ENCODE measurements at regions of chr13 and their contacts with region 1.

Region 1: GRCh38 chr13:78137404-78138142 is 218.9 kb upstream of the EDNRB start:
- DNase-seq: peak; percentile 65
- ATAC-seq: peak; percentile 71
- H3K4me3 ChIP-seq: peak overlapping the region in 4 of 5 experiments; percentile 23 to 48 (median 33)
- H3K4me3 Mint-ChIP-seq: peak overlapping the region; percentile 83
- H3K27ac ChIP-seq: no peak overlapping the region
- H3K27ac Mint-ChIP-seq: no peak overlapping the region
- H3K4me1 ChIP-seq: peaks cover 7% of the 10 kb centered on the region in 2 donors
- H3K4me1 Mint-ChIP-seq: peaks cover 5% of the 10 kb centered on the region
- H3K27me3 ChIP-seq: no peaks in the 10 kb centered on the region
- H3K27me3 Mint-ChIP-seq: no peaks in the 10 kb centered on the region
- CTCF ChIP-seq: peak; percentile 78

Region 2: DNA sequence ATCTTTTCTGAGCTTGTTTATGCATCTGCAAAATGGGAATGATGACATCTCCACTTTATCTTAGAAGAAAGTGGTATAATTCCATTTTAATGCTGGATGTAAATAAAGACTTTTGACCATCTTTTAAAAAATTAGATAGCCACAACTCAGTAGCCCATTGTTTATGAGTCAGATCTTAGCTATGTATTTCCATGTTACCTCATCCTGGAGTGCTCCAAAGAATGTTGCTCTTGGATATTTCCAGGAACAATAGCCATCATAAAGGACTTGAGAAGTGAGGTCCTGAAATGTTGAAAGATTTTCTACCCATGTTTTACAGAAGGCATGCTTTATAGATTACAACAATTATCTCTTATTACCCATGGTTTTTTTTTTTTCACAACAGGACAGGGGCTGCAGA is 10.3 kb after region 1 on chr13:
- CTCF ChIA-PET with region 1: interaction called, 18 read pairs
- POLR2A ChIA-PET with region 1: no interaction called
- intact Hi-C with region 1: no loop called
- DNase-seq: no peak
- ATAC-seq: no peak
- H3K4me3 ChIP-seq: no peak overlapping the region
- H3K4me3 Mint-ChIP-seq: no peak overlapping the region
- H3K27ac ChIP-seq: no peak overlapping the region
- H3K27ac Mint-ChIP-seq: no peak overlapping the region
- H3K4me1 ChIP-seq: no peaks in the 10 kb centered on the region
- H3K4me1 Mint-ChIP-seq: no peaks in the 10 kb centered on the region
- H3K27me3 ChIP-seq: no peaks in the 10 kb centered on the region
- H3K27me3 Mint-ChIP-seq: peaks cover 2% of the 10 kb centered on the region
- CTCF ChIP-seq: no peak

Region 3: GRCh38 chr13:79246578-79246949 is 1109.0 kb after region 1 on chr13:
- CTCF ChIA-PET with region 1: interaction called, 9 read pairs
- POLR2A ChIA-PET with region 1: no interaction called
- intact Hi-C with region 1: loop called (anchors 5 kb)
- DNase-seq: peak; percentile 44
- ATAC-seq: no peak
- H3K4me3 ChIP-seq: no peak overlapping the region
- H3K4me3 Mint-ChIP-seq: no peak overlapping the region
- H3K27ac ChIP-seq: no peak overlapping the region
- H3K27ac Mint-ChIP-seq: peak overlapping the region; percentile 37
- H3K4me1 ChIP-seq: peaks cover 0 to 7% of the 10 kb centered on the region in 2 donors
- H3K4me1 Mint-ChIP-seq: peaks cover 11% of the 10 kb centered on the region
- H3K27me3 ChIP-seq: no peaks in the 10 kb centered on the region
- H3K27me3 Mint-ChIP-seq: no peaks in the 10 kb centered on the region
- CTCF ChIP-seq: peak; percentile 42

Region 4: DNA sequence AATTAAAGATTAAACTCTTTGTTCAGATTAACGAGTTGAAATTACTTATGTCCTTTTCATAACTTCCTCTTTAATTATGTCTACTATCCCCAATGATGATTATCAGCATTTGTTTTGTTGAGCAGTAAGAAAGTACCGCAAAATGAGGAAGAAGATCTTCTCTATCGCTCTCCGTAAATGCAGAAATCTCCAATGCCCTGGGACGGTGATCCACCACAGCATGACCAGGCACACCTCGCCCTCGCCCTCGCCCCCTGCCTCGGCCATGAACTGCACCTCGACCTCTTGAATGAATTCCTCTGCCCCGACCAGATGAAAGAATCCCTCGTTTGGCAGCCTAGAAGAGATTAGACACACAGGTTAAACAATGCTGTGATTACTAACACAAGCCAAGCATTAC is 1199.4 kb after region 1 on chr13:
- CTCF ChIA-PET with region 1: no interaction called
- POLR2A ChIA-PET with region 1: no interaction called
- intact Hi-C with region 1: loop called (anchors 10 kb)
- DNase-seq: peak; percentile 35
- ATAC-seq: peak; percentile 28
- H3K4me3 ChIP-seq: no peak overlapping the region
- H3K4me3 Mint-ChIP-seq: no peak overlapping the region
- H3K27ac ChIP-seq: peak overlapping the region in 1 of 2 donors; percentile 5
- H3K27ac Mint-ChIP-seq: peak overlapping the region; percentile 79
- H3K4me1 ChIP-seq: no peaks in the 10 kb centered on the region
- H3K4me1 Mint-ChIP-seq: peaks cover 10% of the 10 kb centered on the region
- H3K27me3 ChIP-seq: no peaks in the 10 kb centered on the region
- H3K27me3 Mint-ChIP-seq: no peaks in the 10 kb centered on the region
- CTCF ChIP-seq: no peak

Region 5: DNA sequence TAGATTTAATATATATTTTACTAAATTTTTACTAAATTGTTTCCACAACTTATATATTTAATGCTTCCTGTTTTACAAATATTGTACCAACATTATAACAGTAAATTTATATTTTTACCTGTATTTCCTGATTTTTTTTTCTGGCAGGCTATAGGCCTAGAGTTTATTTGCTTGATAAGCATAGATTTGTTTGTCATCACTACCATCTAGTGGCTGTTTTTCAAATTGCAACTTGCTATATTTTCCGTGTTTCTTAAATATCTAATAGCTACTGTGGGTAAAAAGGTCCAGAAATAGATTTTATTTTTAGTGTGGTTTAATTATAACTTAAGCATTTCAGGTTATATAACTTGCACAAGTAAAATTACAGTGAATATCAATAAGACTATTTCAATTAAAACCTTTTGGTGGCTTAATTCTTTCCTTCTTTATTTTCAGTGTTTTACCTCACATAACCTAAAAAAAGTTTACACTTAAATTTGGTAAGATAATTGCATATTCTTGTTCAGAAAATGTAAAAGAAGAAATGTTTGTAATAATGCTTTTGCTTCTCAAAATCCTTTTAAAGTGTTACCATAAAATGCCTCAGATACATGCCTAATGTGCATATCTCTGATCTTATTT is 1404.0 kb after region 1 on chr13:
- CTCF ChIA-PET with region 1: interaction called, 53 read pairs
- POLR2A ChIA-PET with region 1: no interaction called
- intact Hi-C with region 1: no loop called
- DNase-seq: peak; percentile 72
- ATAC-seq: no peak
- H3K4me3 ChIP-seq: no peak overlapping the region
- H3K4me3 Mint-ChIP-seq: no peak overlapping the region
- H3K27ac ChIP-seq: no peak overlapping the region
- H3K27ac Mint-ChIP-seq: no peak overlapping the region
- H3K4me1 ChIP-seq: no peaks in the 10 kb centered on the region
- H3K4me1 Mint-ChIP-seq: no peaks in the 10 kb centered on the region
- H3K27me3 ChIP-seq: no peaks in the 10 kb centered on the region
- H3K27me3 Mint-ChIP-seq: no peaks in the 10 kb centered on the region
- CTCF ChIP-seq: peak; percentile 99